Endothelial cell of umbilical vein (primary cell): ENCODE measurements at regions of chr12 and their contacts with region 1.

Region 1: GRCh38 chr12:74365178-74365964 is 172.3 kb upstream of the ATXN7L3B start:
- DNase-seq: peak; percentile 57
- H3K4me3 ChIP-seq: no peak overlapping the region
- H3K27ac ChIP-seq: no peak overlapping the region
- H3K4me1 ChIP-seq: no peaks in the 10 kb centered on the region
- H3K27me3 ChIP-seq: no peaks in the 10 kb centered on the region
- CTCF ChIP-seq: peak; percentile 40 to 52
- POLR2A ChIP-seq: no peak

Region 2: DNA sequence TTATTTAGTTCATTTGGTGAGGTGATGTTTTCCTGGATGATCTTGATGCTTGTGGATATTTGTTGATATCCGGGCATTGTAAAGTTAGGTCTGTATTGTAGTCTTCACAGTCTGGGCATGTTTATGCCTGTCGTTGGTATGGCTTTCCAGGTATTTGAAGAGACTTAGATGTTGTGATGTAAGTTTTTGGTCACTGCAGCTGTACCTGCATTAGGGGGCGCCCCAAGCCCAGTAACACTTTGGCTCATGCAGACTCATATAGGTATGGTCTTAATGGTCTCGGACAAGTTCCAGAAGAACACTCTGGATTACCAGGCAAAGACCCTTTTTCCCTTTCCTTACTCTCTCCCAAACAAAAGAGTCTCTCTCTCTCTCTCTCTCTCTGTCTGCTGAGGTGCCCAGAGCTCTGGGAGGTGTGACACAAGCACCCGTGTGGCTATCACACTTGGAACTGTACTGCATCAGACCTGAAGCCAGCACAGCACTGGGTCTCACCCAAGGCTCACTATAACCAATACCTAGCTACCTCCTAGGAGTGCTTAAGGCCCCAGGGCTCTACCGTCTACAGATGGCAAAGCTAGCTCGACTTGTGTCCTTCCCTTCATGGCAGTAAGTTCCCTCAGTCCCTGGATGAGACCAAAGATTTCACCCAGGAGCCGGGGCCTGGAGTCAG is 253.5 kb before region 1 on chr12:
- CTCF ChIA-PET with region 1: no interaction called
- POLR2A ChIA-PET with region 1: no interaction called
- dilution Hi-C with region 1: no loop called
- intact Hi-C with region 1: loop called (anchors 2 kb)
- DNase-seq: no peak
- H3K4me3 ChIP-seq: no peak overlapping the region
- H3K27ac ChIP-seq: no peak overlapping the region
- H3K4me1 ChIP-seq: no peaks in the 10 kb centered on the region
- H3K27me3 ChIP-seq: no peaks in the 10 kb centered on the region
- CTCF ChIP-seq: no peak
- POLR2A ChIP-seq: no peak

Region 3: GRCh38 chr12:74401035-74401434 is 35.7 kb after region 1 on chr12:
- CTCF ChIA-PET with region 1: no interaction called
- POLR2A ChIA-PET with region 1: no interaction called
- dilution Hi-C with region 1: no loop called
- intact Hi-C with region 1: no loop called
- DNase-seq: no peak
- H3K4me3 ChIP-seq: no peak overlapping the region
- H3K27ac ChIP-seq: no peak overlapping the region
- H3K4me1 ChIP-seq: no peaks in the 10 kb centered on the region
- H3K27me3 ChIP-seq: no peaks in the 10 kb centered on the region
- CTCF ChIP-seq: no peak
- POLR2A ChIP-seq: no peak

Region 4: GRCh38 chr12:75225546-75225945 is 860.2 kb after region 1 on chr12:
- CTCF ChIA-PET with region 1: no interaction called
- POLR2A ChIA-PET with region 1: no interaction called
- dilution Hi-C with region 1: no loop called
- intact Hi-C with region 1: no loop called
- DNase-seq: no peak
- H3K4me3 ChIP-seq: no peak overlapping the region
- H3K27ac ChIP-seq: no peak overlapping the region
- H3K4me1 ChIP-seq: no peaks in the 10 kb centered on the region
- H3K27me3 ChIP-seq: no peaks in the 10 kb centered on the region
- CTCF ChIP-seq: no peak
- POLR2A ChIP-seq: no peak